GM12878 (cell line): ENCODE measurements at regions of chr6 and their contacts with region 1.

Region 1: DNA sequence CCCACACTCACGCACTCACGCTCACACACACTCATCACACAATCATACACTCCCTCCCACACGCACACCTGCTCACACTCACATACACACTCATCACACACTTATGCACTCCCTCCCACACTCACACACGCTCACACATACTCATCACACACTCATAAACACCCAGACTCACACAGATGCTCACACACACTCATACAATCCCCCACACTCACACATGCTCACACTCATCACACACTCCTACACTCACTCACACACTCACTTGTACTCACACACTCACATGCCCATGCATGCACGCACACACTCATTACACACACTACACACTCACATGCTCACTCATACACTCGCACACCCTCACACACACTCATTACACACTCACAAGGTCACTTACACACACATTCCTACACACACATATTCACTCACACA is 131.1 kb upstream of the PDE10A start:
- DNase-seq: no peak
- ATAC-seq: no peak
- H3K4me3 ChIP-seq: no peak overlapping the region
- H3K27ac ChIP-seq: no peak overlapping the region
- H3K4me1 ChIP-seq: no peaks in the 10 kb centered on the region
- H3K27me3 ChIP-seq: no peaks in the 10 kb centered on the region
- CTCF ChIP-seq: no peak
- EP300 ChIP-seq: no peak
- POLR2A ChIP-seq: no peak
- RAD21 ChIP-seq: no peak

Region 2: GRCh38 chr6:165804331-165805066 is 10.3 kb after region 1 on chr6:
- CTCF ChIA-PET with region 1: no interaction called
- POLR2A ChIA-PET with region 1: no interaction called
- RAD21 ChIA-PET with region 1: no interaction called
- SMC1A ChIA-PET with region 1: no interaction called
- in situ Hi-C with region 1: no loop called
- intact Hi-C with region 1: loop called (anchors 1 kb)
- DNase-seq: no peak
- ATAC-seq: no peak
- H3K4me3 ChIP-seq: no peak overlapping the region
- H3K27ac ChIP-seq: no peak overlapping the region
- H3K4me1 ChIP-seq: no peaks in the 10 kb centered on the region
- H3K27me3 ChIP-seq: no peaks in the 10 kb centered on the region; a peak in 1 of 4 replicates
- CTCF ChIP-seq: no peak
- EP300 ChIP-seq: no peak
- POLR2A ChIP-seq: no peak
- RAD21 ChIP-seq: no peak